PC-3 (cell line): ENCODE measurements at regions of chr2 and their contacts with region 1.

Region 1: DNA sequence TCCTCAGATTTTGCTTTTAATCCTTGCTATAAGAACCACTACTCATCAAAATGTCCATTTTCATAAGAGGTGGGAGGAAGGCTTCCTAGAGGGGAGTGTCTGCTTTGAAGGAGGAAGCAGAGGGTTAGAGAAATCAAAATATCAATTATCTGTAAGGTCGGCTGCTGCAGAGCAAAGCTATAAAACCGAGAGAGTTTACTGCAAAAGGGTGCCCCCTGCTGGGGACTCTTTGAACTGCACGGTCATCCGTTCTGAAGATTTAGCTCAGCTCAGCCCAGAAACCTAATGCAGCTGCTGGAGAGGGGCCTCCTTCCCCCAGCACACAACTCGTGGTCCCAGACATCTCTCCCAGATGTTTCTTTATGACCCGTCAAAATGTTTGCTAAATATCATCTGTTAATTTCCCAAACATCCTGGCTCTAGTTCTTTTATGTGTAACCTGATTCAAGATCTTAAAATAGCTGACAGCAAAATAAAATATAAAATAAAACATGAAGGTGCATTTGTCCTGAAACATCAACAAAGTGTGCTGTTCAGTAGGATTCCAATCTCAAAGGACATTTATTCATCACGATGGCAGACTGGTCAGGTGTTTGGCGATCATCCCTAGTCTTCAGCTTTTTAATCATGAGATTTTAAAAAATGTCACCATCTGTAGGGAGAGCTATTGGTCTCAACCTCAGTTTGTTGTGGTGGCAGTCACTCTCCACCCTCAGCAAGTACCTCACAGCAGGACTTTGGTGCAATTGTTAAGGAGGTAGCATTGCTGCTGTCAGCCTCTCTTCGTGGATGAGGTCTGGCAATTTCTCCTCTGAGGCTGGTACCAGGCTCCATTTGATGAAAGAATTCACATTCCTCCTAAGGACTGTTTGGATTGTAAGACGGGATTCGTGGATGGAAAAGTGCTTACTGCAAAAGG is 185.9 kb downstream of the MTX2 start:
- DNase-seq: peak; percentile 92
- ATAC-seq: peak; percentile 78
- H3K4me3 ChIP-seq: no peak overlapping the region
- H3K27ac ChIP-seq: no peak overlapping the region
- H3K4me1 ChIP-seq: no peaks in the 10 kb centered on the region
- H3K27me3 ChIP-seq: no peaks in the 10 kb centered on the region
- CTCF ChIP-seq: peak; percentile 92

Region 2: GRCh38 chr2:176269319-176270099 is 185.6 kb before region 1 on chr2 and contains the start of gene MTX2:
- CTCF ChIA-PET with region 1: interaction called, 3 read pairs
- POLR2A ChIA-PET with region 1: no interaction called
- intact Hi-C with region 1: loop called (anchors 2 kb)
- DNase-seq: peak; percentile 76
- ATAC-seq: peak; percentile 94
- H3K4me3 ChIP-seq: peak within 1 kb of the TSS; percentile 94
- H3K27ac ChIP-seq: peak within 1 kb of the TSS; percentile 66
- H3K4me1 ChIP-seq: peaks cover 6% of the 10 kb centered on the region; the same call in 1 of the 2 replicates
- H3K27me3 ChIP-seq: no peaks in the 10 kb centered on the region
- CTCF ChIP-seq: no peak
- total RNA-seq, gene MTX2: 33.3 and 54.5 TPM in 2 replicates

Region 3: GRCh38 chr2:176653479-176654443 is 198.6 kb after region 1 on chr2:
- CTCF ChIA-PET with region 1: interaction called, 15 read pairs
- POLR2A ChIA-PET with region 1: no interaction called
- intact Hi-C with region 1: no loop called
- DNase-seq: peak; percentile 89
- ATAC-seq: peak; percentile 89
- H3K4me3 ChIP-seq: no peak overlapping the region
- H3K27ac ChIP-seq: no peak overlapping the region
- H3K4me1 ChIP-seq: no peaks in the 10 kb centered on the region
- H3K27me3 ChIP-seq: no peaks in the 10 kb centered on the region
- CTCF ChIP-seq: peak; percentile 85